A549 (cell line): ENCODE measurements at regions of chr12 and their contacts with region 1.

Region 1: DNA sequence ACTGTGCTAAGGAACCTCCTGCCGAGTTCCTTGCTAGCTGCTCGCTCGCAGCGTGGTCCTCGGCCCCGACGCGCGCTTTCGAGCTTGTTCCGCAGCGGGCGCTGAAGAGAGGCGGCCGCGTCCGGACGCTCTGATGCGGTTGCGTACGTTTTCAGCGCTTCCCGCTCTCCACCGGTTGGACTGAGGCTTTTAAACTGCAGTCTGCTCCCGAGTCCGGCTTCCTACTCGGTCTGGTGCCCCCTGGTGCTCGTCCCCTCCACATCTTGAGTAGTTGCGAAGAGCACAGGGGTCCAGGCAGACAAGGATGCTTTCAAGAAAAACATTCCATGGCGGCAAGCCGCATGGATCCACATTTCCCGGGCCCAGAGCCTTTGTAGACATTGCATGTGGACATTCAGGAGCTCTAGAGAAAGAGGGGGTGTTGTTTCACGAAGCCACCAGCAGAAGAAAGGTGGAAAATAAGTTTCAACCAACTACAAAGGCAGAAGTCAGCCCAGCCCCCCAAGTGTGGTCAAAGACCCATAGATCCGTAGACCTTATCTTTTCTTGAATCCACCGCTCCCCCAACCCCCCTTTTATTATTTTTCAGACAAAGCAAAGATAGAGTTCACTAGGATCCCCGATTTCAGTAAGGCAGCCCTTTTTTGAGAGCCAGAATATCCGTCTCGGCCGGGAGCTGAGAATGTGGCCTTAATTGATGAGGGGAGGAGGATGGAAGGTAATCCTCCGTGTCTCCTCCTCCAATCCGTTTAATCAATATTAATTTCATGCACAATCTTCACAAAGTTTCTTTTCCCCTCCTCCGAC is 984 bp upstream of the WNK1 start:
- DNase-seq: peak; percentile 94 to 99
- ATAC-seq: peak; percentile 70 to 85
- H3K4me3 ChIP-seq: peak overlapping the region; percentile 49
- H3K27ac ChIP-seq: peak overlapping the region; percentile 79 to 90
- H3K4me1 ChIP-seq: peaks cover 19% of the 10 kb centered on the region
- CTCF ChIP-seq: peak; percentile 80
- EP300 ChIP-seq: no peak
- POLR2A ChIP-seq: peak; percentile 73
- RAD21 ChIP-seq: peak; percentile 86 to 89

Region 2: GRCh38 chr12:530308-530707 is 221.1 kb before region 1 on chr12:
- CTCF ChIA-PET with region 1: no interaction called
- POLR2A ChIA-PET with region 1: no interaction called
- DNase-seq: no peak
- ATAC-seq: no peak
- H3K4me3 ChIP-seq: no peak overlapping the region
- H3K27ac ChIP-seq: no peak overlapping the region
- H3K4me1 ChIP-seq: no peaks in the 10 kb centered on the region
- CTCF ChIP-seq: no peak
- EP300 ChIP-seq: no peak
- POLR2A ChIP-seq: no peak
- RAD21 ChIP-seq: no peak

Region 3: DNA sequence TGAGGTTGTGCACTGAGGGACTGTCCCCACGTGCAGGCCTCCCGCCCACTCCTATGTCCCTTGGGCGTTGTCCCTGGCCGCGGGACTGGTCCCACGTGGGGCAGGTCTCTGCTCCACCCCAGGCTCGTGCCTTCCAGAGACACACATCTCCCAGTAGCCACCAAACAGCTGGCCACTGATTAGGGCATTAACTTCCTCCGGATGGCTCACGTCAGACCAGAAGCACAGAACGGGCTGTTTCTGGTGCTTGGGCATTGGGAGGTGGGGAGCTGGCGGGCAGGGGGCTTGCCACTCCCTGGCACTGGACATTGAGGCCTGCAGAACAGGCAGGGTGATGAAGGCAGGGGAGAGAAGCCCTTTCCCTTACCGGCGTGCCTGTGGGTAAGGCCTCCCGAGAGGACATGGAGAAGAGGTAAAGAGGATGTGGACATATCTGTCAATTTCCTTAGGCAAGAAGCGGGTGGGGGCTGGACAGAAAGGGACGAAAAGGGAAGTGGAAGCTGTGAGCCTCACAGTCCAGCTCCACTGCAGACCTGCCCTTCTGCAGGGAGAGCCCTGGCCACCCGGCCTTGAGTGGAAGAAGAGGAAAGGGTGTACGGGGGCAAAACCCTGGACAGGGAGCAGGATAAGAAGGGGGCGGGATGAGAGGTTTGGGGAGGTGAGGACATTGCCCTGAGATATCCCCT is 189.3 kb before region 1 on chr12:
- CTCF ChIA-PET with region 1: interaction called, 18 read pairs
- POLR2A ChIA-PET with region 1: no interaction called
- DNase-seq: no peak
- ATAC-seq: no peak
- H3K4me3 ChIP-seq: no peak overlapping the region
- H3K27ac ChIP-seq: no peak overlapping the region
- H3K4me1 ChIP-seq: no peaks in the 10 kb centered on the region
- CTCF ChIP-seq: no peak
- EP300 ChIP-seq: no peak
- POLR2A ChIP-seq: no peak
- RAD21 ChIP-seq: no peak

Region 4: DNA sequence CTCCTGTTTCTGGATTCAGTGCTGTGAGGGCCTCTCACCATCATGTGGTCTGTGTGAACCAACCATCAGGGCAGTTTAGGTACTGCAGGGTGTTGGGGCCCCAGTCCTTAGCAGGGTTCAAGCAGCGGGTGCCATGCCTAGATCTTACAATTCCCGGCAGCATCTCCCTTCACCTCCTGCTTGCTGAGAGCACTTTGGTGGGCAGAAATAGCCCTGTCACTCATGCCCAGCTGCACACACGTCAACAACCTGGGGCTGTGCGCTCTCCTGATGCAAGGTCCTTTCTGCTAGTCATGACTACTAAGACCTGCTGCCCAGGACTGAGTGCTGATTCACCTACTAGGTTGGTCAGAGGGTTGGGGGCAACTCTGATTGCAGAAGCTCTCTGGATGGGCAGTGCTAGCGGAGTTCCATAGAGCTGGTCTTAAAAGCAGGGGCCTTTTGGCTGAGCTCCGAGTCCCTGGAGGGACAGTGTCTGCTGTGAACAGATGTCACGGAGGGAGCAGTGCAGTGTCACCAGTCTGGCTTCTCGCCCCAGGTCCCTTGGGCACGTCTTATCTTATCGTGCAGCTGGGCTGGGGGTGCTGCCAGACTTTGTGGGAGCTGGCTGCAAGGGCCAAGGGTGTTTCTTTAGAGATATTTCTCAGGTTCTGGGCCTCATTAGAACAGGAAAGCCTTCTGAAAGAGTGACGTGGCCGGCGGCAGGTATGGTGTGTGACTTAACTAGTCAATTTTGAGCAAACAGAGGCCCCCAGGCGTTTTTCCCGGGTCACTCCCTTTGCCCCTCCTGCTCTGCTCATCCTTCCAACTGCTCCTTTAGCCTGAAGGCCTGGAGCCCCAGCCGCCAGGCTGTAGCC is 160.0 kb before region 1 on chr12:
- CTCF ChIA-PET with region 1: interaction called, 10 read pairs
- POLR2A ChIA-PET with region 1: no interaction called
- DNase-seq: no peak
- ATAC-seq: peak; percentile 68 to 83; a peak in 5 of 6 replicates
- H3K4me3 ChIP-seq: no peak overlapping the region
- H3K27ac ChIP-seq: no peak overlapping the region
- H3K4me1 ChIP-seq: no peaks in the 10 kb centered on the region
- CTCF ChIP-seq: no peak
- EP300 ChIP-seq: no peak
- POLR2A ChIP-seq: no peak
- RAD21 ChIP-seq: no peak

Region 5: GRCh38 chr12:614411-614970 is 136.9 kb before region 1 on chr12:
- CTCF ChIA-PET with region 1: interaction called, 52 read pairs
- POLR2A ChIA-PET with region 1: interaction called, 4 read pairs
- DNase-seq: peak in 1 of 2 experiments; percentile 76
- ATAC-seq: peak; percentile 65 to 83; a peak in 5 of 6 replicates
- H3K4me3 ChIP-seq: no peak overlapping the region
- H3K27ac ChIP-seq: peak overlapping the region; percentile 71 to 75
- H3K4me1 ChIP-seq: peaks cover 30% of the 10 kb centered on the region
- CTCF ChIP-seq: peak; percentile 54
- EP300 ChIP-seq: no peak
- POLR2A ChIP-seq: no peak
- RAD21 ChIP-seq: peak; percentile 84 to 91

Region 6: DNA sequence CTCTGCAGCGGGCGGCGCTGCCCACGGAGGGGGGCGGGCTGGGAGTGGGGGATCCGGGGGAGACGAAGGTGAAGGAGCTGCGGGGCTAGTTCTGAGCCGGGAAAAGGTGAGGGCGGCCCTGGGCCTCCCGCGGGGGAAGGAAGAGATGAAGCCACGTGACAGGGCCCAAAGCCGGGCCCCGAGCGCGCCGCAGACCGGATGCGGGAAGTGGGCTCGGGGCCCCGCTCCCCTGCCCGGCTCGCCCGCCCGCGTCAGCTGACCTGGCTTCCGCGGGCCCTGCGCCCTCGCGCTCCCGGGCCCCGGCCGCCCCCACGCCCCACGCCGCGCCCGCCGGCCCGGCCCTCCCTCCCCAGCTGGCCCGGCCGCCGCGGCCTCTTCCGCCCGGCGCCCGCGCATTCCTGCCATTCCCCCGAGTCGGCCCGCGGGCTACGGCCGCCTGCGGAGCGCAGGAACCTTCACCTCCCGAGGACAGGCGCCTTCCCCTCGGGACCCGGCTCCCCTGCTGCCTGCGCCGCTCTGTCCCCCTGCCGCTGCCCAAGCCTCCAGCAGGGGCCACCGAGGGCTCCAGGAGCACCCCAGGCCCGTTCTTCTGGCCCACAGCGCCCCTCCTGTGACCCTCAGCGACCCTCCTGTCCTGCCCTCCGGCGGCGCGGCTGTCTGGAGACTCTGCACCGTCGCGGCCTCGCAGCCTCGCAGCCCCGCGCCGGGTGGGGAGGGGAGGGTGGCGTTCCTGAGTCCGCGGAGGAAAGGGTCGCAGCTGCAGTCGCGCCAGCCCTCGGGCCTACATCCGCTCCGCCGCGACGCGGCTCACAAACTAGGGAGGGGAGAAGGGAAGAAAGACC is 108.5 kb before region 1 on chr12:
- CTCF ChIA-PET with region 1: interaction called, 24 read pairs
- POLR2A ChIA-PET with region 1: interaction called, 31 read pairs
- DNase-seq: peak; percentile 82 to 83
- ATAC-seq: peak; percentile 73 to 88
- H3K4me3 ChIP-seq: peak overlapping the region; percentile 50
- H3K27ac ChIP-seq: peak overlapping the region; percentile 98
- H3K4me1 ChIP-seq: peaks cover 49% of the 10 kb centered on the region
- CTCF ChIP-seq: peak; percentile 24; the same call in 2 of the 3 replicates
- EP300 ChIP-seq: no peak; a peak in 1 of 5 replicates
- POLR2A ChIP-seq: peak; percentile 24; the same call in 1 of the 2 replicates
- RAD21 ChIP-seq: peak in 1 of 2 experiments; percentile 13; a peak in 2 of 5 replicates

Region 7: GRCh38 chr12:709455-710020 is 41.9 kb before region 1 on chr12:
- CTCF ChIA-PET with region 1: interaction called, 11 read pairs
- POLR2A ChIA-PET with region 1: no interaction called
- DNase-seq: no peak
- ATAC-seq: no peak
- H3K4me3 ChIP-seq: no peak overlapping the region
- H3K27ac ChIP-seq: no peak overlapping the region
- H3K4me1 ChIP-seq: peaks cover 9% of the 10 kb centered on the region; the same call in 2 of the 3 replicates
- CTCF ChIP-seq: no peak
- EP300 ChIP-seq: no peak
- POLR2A ChIP-seq: no peak
- RAD21 ChIP-seq: no peak

Region 8: DNA sequence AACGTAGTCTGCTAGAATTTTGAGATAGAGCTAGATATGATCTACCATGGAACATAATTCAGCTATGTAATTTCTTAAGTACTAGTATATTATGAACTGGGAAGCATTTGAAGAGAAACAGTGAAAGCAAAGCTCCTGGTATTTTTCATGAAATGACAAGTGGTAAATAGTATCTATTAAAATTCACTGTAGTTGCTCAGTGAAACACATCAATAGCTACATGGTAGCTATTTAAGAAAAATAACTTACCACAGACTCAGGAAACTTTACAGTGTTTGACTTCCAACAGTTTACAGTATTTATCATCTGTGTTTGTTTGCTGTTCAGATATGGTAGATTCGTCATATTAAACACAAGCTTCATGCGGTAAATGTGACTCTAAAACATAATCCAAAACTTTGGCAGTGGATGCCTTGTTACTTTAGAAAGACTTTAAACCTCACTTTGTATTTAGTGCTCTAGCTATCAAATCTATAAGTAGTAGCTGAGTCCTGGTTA is 26.2 kb after region 1 on chr12:
- CTCF ChIA-PET with region 1: interaction called, 14 read pairs
- POLR2A ChIA-PET with region 1: no interaction called
- DNase-seq: no peak
- ATAC-seq: no peak
- H3K4me3 ChIP-seq: no peak overlapping the region
- H3K27ac ChIP-seq: no peak overlapping the region
- H3K4me1 ChIP-seq: peaks cover 86% of the 10 kb centered on the region
- CTCF ChIP-seq: no peak
- EP300 ChIP-seq: no peak
- POLR2A ChIP-seq: no peak
- RAD21 ChIP-seq: no peak

Region 9: GRCh38 chr12:848173-848865 is 96.9 kb after region 1 on chr12:
- CTCF ChIA-PET with region 1: no interaction called
- POLR2A ChIA-PET with region 1: no interaction called
- DNase-seq: no peak
- ATAC-seq: peak in 1 of 2 experiments; percentile 33; a peak in 2 of 6 replicates
- H3K4me3 ChIP-seq: no peak overlapping the region
- H3K27ac ChIP-seq: peak overlapping the region; percentile 56 to 78
- H3K4me1 ChIP-seq: peaks cover 59% of the 10 kb centered on the region
- CTCF ChIP-seq: no peak
- EP300 ChIP-seq: no peak
- POLR2A ChIP-seq: no peak
- RAD21 ChIP-seq: no peak